Dorsolateral prefrontal cortex (tissue), 120 donors: ENCODE measurements at regions of chr16 and their contacts with region 1.

Region 1: DNA sequence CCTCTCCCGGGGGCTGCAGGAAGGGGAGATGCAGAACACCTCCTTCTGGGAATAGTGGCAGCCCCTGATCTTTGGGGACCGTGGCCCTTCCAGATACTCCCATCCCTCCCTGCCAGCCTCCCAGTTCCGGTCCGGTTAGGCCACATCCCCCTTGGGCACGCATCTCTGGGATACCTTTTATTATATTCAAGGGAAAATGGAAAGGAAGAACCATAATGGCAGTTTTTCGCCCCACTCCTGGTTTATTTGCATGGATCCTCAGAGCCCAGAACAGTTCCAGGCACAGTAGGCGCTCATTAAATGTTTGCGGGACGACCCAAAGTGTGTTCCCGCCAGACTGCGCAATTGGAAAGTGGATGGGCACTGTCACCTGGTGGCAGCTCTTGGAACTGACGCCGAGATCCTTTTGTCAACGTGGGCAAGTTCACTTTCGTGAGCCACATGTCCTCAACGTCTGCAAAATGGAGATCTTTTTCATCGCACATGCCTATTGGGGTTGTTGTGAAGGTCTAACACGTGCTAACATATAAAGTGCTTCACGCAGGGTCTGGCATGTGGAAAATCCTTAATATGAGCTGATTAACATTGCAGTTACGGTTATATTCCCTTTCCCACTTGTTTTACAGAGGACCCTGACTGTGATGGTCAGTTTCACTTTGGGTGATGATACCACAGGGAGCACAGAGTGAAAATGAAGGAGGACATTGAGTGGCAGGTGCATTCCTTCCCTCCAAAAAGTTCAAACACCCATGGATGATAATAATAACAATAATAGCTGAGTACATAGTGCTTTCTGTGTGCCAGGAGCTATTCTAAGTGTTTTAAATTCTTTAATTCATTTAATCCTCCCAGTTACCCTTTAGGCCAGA is 1.7 kb upstream of the GPRC5B start:
- DNase-seq: peak; percentile 76 to 91 (median 84)
- H3K4me3 ChIP-seq: peak overlapping the region in 56 of 59 donors; percentile 1 to 95 (median 82)
- H3K27ac ChIP-seq: peak overlapping the region; percentile 40 to 99 (median 96)
- H3K27me3 ChIP-seq: no peaks in the 10 kb centered on the region
- CTCF ChIP-seq: peak; percentile 99 to 100 (median 100)

Region 2: GRCh38 chr16:19555162-19555937 is 331.0 kb before region 1 on chr16 and contains the start of gene VPS35L:
- intact Hi-C with region 1: loop called (anchors 1 to 2 kb)
- DNase-seq: peak; percentile 85 to 97 (median 96)
- H3K4me3 ChIP-seq: peak within 1 kb of the TSS; percentile 65 to 99 (median 90)
- H3K27ac ChIP-seq: peak within 1 kb of the TSS; percentile 72 to 99 (median 96)
- H3K27me3 ChIP-seq: no peaks in the 10 kb centered on the region
- CTCF ChIP-seq: peak; percentile 60 to 91 (median 79)
- total RNA-seq, gene VPS35L: 61.8 to 152 (median 97.7) TPM

Region 3: DNA sequence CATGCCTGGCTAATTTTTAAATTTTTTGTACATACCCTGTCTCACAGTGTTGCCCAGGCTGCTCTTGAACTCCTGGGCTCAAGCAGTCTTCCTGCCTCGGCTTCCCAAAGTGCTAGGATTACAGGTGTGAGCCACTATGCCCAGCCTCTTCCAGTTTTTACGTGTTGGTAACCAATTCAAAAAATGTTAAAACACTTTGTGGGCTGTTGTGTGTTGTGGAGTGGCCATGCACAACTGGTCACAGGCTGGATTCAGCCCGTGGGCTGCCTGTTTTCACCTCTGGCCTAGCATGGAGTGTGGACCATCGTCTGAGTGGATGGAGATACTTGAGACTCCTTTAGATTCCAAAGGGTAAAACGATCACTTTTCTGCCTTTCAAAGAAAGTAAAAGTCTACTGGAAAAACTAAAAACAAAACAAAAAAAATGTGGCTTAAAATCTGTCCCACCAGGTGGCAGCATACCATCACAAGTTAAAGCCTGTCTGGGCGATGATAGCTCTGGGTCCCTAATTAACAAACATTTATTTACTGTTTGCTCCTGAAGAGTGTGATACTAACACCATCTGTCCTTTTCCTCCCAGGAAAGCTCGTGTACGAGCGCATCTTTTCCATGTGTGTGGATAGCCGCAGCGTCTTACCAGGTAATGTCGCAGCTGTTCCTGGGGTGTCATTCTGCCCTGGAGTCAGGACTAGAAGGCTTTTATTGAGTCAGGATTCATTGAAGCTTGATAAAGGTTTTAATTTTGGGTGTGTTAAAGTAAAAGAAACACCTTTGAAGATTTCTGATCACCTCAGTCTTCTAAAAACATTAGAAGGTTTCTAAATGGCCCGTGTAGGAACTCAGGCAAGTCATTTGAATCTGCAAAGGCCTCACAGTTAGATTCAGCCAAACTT is 285.0 kb before region 1 on chr16:
- intact Hi-C with region 1: loop called (anchors 1 kb)
- DNase-seq: peak in 3 of 10 donors; percentile 15 to 47 (median 41)
- H3K4me3 ChIP-seq: peak overlapping the region in 26 of 59 donors; percentile 0 to 42 (median 21)
- H3K27ac ChIP-seq: peak overlapping the region; percentile 7 to 97 (median 89)
- H3K27me3 ChIP-seq: no peaks in the 10 kb centered on the region
- CTCF ChIP-seq: peak; percentile 70 to 95 (median 87)

Region 4: DNA sequence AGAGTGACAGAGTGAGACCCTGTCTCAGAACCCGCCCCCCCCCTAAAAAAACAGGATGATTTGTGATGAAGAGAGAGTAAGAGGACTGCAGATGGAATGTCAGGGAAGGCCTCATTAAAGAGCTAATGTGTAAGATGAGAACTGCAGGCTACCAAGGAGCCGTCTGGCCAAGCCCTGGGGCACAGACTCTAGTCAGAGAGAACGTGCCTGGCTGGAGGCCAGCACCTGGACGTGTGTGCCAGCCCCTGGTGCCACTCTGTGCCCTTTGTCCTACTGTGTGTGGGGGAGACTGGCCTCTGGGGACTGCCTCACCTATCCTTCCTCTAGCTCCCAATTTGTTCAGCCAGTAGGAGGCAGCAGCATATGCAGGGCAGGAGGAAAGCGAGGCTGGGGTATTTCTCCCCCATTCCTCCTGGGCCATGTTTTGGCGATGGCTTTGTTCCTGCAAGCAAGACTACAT is 205.4 kb before region 1 on chr16:
- intact Hi-C with region 1: loop called in 1 of 2 experiments (anchors 10 kb)
- DNase-seq: peak in 1 of 10 donors; percentile 34
- H3K4me3 ChIP-seq: no peak overlapping the region
- H3K27ac ChIP-seq: peak overlapping the region in 39 of 59 donors; percentile 5 to 83 (median 46)
- H3K27me3 ChIP-seq: no peaks in the 10 kb centered on the region
- CTCF ChIP-seq: peak in 10 of 56 donors; percentile 5 to 16 (median 12)

Region 5: GRCh38 chr16:19765860-19766553 is 120.3 kb before region 1 on chr16:
- intact Hi-C with region 1: loop called (anchors 2 to 5 kb)
- DNase-seq: peak; percentile 26 to 88 (median 74)
- H3K4me3 ChIP-seq: peak overlapping the region in 55 of 59 donors; percentile 10 to 60 (median 38)
- H3K27ac ChIP-seq: peak overlapping the region; percentile 49 to 100 (median 94)
- H3K27me3 ChIP-seq: no peaks in the 10 kb centered on the region
- CTCF ChIP-seq: peak in 5 of 56 donors; percentile 2 to 17 (median 5)

Region 6: DNA sequence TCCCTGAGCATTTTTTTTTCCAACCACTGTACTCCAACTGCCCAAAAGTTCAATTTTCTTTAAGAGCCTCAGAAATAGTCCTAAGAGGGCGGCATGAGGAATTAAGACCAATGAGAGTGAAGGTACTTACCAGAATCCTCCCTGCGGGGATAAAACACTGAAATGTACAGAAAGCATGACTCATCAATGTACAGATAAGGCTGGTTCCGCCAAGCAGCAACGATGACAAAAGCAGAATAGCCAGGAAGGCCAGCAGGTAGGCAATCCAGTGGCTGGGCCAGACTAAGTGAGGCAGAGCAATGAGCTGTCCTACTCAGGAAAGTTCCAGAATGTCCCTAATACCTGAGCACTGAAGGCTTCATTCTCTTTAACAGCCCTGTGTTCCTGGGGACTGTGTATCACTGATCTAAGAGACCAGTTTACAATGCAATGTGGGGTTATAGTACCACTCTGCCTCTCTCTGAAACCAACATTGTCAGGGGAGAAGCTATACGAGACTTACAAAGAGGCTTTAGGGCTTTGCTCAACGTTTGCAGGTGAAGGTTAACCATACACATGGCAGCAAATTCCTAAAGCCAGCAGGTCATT is 198.4 kb after region 1 on chr16:
- intact Hi-C with region 1: no loop called
- DNase-seq: no peak
- H3K4me3 ChIP-seq: no peak overlapping the region
- H3K27ac ChIP-seq: no peak overlapping the region
- H3K27me3 ChIP-seq: peaks cover 0 to 48% (median 2%) of the 10 kb centered on the region in 45 donors
- CTCF ChIP-seq: no peak